ENCODE measurements at regions of chr15 and their contacts with region 1.

Region 1: GRCh38 chr15:70459312-70459875 is 304.0 kb downstream of the UACA start:
- DNase-seq: no peak
- H3K4me3 Mint-ChIP-seq: no peak overlapping the region
- H3K27ac Mint-ChIP-seq: no peak overlapping the region
- H3K4me1 Mint-ChIP-seq: peaks cover 7% of the 10 kb centered on the region
- H3K27me3 Mint-ChIP-seq: no peaks in the 10 kb centered on the region
- CTCF ChIP-seq: no peak

Region 2: GRCh38 chr15:70121624-70122297 is 337.6 kb before region 1 on chr15:
- CTCF ChIA-PET with region 1: interaction called, 3 read pairs
- POLR2A ChIA-PET with region 1: no interaction called
- intact Hi-C with region 1: loop called (anchors 2 kb)
- DNase-seq: peak; percentile 89
- H3K4me3 Mint-ChIP-seq: no peak overlapping the region
- H3K27ac Mint-ChIP-seq: no peak overlapping the region
- H3K4me1 Mint-ChIP-seq: peaks cover 16% of the 10 kb centered on the region
- H3K27me3 Mint-ChIP-seq: peaks cover 41% of the 10 kb centered on the region
- CTCF ChIP-seq: peak; percentile 31

Region 3: GRCh38 chr15:70512772-70513362 is 53.5 kb after region 1 on chr15:
- CTCF ChIA-PET with region 1: no interaction called
- POLR2A ChIA-PET with region 1: no interaction called
- intact Hi-C with region 1: no loop called
- DNase-seq: peak; percentile 85
- H3K4me3 Mint-ChIP-seq: no peak overlapping the region
- H3K27ac Mint-ChIP-seq: no peak overlapping the region
- H3K4me1 Mint-ChIP-seq: peaks cover 14% of the 10 kb centered on the region
- H3K27me3 Mint-ChIP-seq: peaks cover 8% of the 10 kb centered on the region
- CTCF ChIP-seq: peak; percentile 84

Region 4: DNA sequence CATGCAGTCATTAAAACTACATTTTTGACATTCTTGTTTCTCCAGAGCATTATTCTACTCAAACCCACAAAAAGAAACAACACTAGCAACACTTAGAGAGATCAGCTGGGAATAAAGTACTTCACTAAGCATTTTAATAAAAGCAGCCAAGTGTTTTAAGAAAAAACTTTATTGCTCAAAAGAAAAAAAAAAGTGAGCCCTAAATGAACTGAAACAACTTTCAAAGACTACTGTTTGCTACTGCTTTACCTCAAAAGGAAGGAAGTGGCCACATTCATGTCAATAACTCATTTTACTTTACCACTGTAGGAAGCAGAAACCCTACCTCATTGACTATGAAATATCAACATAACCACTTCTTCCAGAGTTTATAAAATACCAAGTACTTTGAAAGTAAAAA is 212.7 kb after region 1 on chr15:
- CTCF ChIA-PET with region 1: no interaction called
- POLR2A ChIA-PET with region 1: no interaction called
- intact Hi-C with region 1: no loop called
- DNase-seq: no peak
- H3K4me3 Mint-ChIP-seq: no peak overlapping the region
- H3K27ac Mint-ChIP-seq: no peak overlapping the region
- H3K4me1 Mint-ChIP-seq: no peaks in the 10 kb centered on the region
- H3K27me3 Mint-ChIP-seq: no peaks in the 10 kb centered on the region
- CTCF ChIP-seq: no peak

Measured in MCF 10A (cell line).